MCF 10A (cell line): ENCODE measurements at regions of chr2 and their contacts with region 1.

Region 1: DNA sequence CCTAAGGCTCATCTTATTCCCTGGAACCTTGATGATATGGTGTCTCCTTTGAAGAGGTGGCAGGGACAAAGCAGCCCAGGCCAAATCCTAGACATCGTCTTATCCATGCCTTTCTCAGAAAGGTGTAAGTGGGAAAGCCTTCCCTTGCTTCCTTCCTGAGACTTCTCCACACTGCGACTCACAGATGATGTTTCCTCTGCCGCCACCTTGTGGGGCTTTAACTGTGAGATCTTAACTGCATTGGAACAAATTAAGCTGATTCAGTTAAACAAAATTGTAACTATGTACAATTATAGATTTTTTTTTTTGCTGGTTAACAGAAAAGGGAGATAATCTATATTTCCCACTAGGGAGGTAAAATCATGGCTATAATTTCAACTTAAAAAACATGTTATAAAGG is 10.0 kb upstream of the GCA start:
- DNase-seq: peak; percentile 58
- H3K4me3 Mint-ChIP-seq: no peak overlapping the region
- H3K27ac Mint-ChIP-seq: no peak overlapping the region
- H3K4me1 Mint-ChIP-seq: no peaks in the 10 kb centered on the region
- H3K27me3 Mint-ChIP-seq: peaks cover 21% of the 10 kb centered on the region
- CTCF ChIP-seq: peak; percentile 50

Region 2: GRCh38 chr2:161104054-161104553 is 1229.9 kb before region 1 on chr2:
- CTCF ChIA-PET with region 1: no interaction called
- POLR2A ChIA-PET with region 1: no interaction called
- intact Hi-C with region 1: no loop called
- DNase-seq: peak; percentile 16
- H3K4me3 Mint-ChIP-seq: no peak overlapping the region
- H3K27ac Mint-ChIP-seq: peak overlapping the region; percentile 49
- H3K4me1 Mint-ChIP-seq: peaks cover 32% of the 10 kb centered on the region
- H3K27me3 Mint-ChIP-seq: no peaks in the 10 kb centered on the region
- CTCF ChIP-seq: no peak

Region 3: GRCh38 chr2:162318328-162319180 is 15.4 kb before region 1 on chr2 and contains the start of gene IFIH1:
- CTCF ChIA-PET with region 1: interaction called, 12 read pairs
- POLR2A ChIA-PET with region 1: interaction called, 7 read pairs
- intact Hi-C with region 1: no loop called
- DNase-seq: peak; percentile 94
- H3K4me3 Mint-ChIP-seq: peak within 1 kb of the TSS; percentile 86
- H3K27ac Mint-ChIP-seq: peak within 1 kb of the TSS; percentile 99
- H3K4me1 Mint-ChIP-seq: peaks cover 19% of the 10 kb centered on the region
- H3K27me3 Mint-ChIP-seq: no peaks in the 10 kb centered on the region
- CTCF ChIP-seq: peak; percentile 18
- total RNA-seq, gene IFIH1: 4.5 and 7.2 TPM in 2 replicates

Region 4: GRCh38 chr2:162370931-162371330 is 37.0 kb after region 1 on chr2:
- CTCF ChIA-PET with region 1: no interaction called
- POLR2A ChIA-PET with region 1: no interaction called
- intact Hi-C with region 1: no loop called
- DNase-seq: no peak
- H3K4me3 Mint-ChIP-seq: no peak overlapping the region
- H3K27ac Mint-ChIP-seq: no peak overlapping the region
- H3K4me1 Mint-ChIP-seq: no peaks in the 10 kb centered on the region
- H3K27me3 Mint-ChIP-seq: peaks cover 86% of the 10 kb centered on the region
- CTCF ChIP-seq: no peak

Region 5: GRCh38 chr2:162449471-162449870 is 115.5 kb after region 1 on chr2:
- CTCF ChIA-PET with region 1: no interaction called
- POLR2A ChIA-PET with region 1: no interaction called
- intact Hi-C with region 1: no loop called
- DNase-seq: no peak
- H3K4me3 Mint-ChIP-seq: no peak overlapping the region
- H3K27ac Mint-ChIP-seq: no peak overlapping the region
- H3K4me1 Mint-ChIP-seq: no peaks in the 10 kb centered on the region
- H3K27me3 Mint-ChIP-seq: peaks cover 83% of the 10 kb centered on the region
- CTCF ChIP-seq: no peak